Left cardiac atrium (tissue), 4 donors: ENCODE measurements at regions of chr1 and their contacts with region 1.

Region 1: DNA sequence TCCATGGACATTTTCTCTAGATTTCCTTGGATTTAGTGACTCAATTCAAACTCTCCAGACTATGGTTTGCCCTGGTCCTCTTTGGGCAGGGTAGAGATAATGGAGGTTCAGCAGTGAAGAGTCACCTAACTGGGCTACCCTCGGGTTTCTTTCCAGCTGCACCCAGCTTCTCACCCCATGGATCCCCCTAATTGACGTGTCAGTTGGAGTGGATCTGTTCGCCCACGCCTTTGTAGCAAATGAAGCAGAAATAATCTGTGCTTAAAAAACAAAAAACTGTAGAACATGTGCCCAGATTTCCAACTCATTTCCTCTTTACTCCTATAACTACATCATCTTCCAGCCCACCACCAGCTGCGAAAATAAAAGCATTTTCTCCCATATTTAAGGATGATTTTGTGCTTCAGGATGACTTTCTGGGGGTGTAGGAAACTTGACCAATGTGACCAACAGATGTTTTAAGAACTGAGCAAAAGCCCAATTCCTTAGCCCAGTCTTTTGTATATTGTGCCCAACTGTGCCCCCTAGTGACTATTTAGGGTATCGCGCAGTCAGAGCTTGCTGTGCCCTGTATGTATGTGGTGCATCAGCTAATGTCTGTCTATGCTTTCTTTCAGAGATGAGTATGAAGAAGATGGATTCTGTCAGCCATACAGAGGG is 66.5 kb upstream of the UBE2U start:
- DNase-seq: peak; percentile 68
- ATAC-seq: peak; percentile 80 to 82

Region 2: DNA sequence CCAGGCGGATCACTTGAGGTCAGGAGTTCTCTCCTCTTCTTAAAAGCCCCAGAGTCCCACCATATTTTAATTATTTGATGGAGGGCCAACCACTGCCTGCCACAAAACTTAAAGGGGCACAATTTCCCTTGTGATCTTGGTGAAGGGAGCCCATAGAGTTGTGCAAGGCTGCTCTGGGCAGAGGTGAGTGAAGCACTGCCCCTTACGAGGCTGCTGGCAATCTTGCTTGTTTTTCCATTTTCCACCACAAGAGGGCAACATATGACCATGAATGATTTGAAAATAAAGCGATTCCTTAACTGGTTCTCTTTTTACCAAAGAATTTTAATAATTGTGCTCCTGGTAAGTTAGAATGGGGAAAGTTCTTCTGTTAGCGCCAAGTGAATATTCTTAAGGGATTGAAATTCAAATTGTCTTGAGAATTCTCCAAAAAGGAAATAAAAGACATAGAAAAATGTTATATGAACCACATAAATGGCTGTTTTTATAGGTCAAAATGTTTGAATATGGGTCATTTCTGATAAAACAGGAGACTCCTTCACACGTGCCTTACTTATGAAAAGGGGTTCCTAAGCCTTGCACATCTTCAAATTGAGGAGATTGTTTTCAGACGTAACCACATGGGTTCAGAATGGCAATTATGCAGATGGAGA is 521.0 kb before region 1 on chr1:
- intact Hi-C with region 1: loop called in 1 of 2 experiments (anchors 5 kb)
- DNase-seq: peak; percentile 34
- ATAC-seq: peak; percentile 69 to 79

Region 3: DNA sequence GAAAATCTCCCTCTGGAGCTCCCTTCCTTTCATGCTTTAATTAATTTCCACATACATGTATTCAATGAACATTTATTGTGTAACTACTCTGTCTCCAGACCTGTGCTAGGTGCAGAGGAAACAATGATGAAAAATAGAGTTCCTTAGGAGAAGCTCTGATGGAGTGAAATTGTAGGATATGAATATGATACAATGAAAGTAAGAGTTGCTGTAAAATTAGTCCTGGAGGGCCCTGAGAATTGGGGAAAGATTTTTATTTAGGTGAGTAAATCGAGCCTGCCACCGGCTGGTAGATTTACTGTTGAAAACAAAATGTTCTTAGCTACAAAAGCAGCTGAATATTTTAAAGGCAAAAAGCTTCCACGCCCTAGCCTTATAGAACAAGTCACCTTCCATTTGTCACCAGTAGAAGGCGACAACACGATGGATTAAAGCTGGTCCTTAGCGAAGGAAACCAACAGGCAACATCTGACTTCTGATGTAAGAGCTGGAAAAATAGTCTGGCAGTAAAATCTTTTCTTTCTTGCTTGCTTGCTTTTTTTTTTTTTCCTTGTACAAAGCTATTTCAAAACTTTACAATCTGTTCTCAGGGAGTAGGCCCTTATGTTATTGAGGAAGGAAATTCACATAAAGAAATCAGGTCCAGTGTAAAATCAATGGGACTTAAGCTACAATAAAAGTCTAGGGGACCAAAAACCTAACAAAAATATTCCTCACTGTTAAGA is 445.0 kb before region 1 on chr1:
- intact Hi-C with region 1: loop called (anchors 5 to 10 kb)
- DNase-seq: peak; percentile 37
- ATAC-seq: peak; percentile 83 to 90

Region 4: GRCh38 chr1:63773815-63774616 is 362.9 kb before region 1 on chr1 and contains the start of gene ROR1:
- intact Hi-C with region 1: loop called in 1 of 2 experiments (anchors 5 kb)
- DNase-seq: peak; percentile 88
- ATAC-seq: peak; percentile 97
- total RNA-seq, gene ROR1: 5.7 to 14.7 TPM

Region 5: GRCh38 chr1:63935143-63935542 is 201.7 kb before region 1 on chr1:
- intact Hi-C with region 1: loop called in 1 of 2 experiments (anchors 10 kb)
- DNase-seq: no peak
- ATAC-seq: peak; percentile 53 to 60

Region 6: GRCh38 chr1:64212031-64212430 is 75.1 kb after region 1 on chr1:
- intact Hi-C with region 1: no loop called
- DNase-seq: no peak
- ATAC-seq: peak in 1 of 2 donors; percentile 78

Region 7: DNA sequence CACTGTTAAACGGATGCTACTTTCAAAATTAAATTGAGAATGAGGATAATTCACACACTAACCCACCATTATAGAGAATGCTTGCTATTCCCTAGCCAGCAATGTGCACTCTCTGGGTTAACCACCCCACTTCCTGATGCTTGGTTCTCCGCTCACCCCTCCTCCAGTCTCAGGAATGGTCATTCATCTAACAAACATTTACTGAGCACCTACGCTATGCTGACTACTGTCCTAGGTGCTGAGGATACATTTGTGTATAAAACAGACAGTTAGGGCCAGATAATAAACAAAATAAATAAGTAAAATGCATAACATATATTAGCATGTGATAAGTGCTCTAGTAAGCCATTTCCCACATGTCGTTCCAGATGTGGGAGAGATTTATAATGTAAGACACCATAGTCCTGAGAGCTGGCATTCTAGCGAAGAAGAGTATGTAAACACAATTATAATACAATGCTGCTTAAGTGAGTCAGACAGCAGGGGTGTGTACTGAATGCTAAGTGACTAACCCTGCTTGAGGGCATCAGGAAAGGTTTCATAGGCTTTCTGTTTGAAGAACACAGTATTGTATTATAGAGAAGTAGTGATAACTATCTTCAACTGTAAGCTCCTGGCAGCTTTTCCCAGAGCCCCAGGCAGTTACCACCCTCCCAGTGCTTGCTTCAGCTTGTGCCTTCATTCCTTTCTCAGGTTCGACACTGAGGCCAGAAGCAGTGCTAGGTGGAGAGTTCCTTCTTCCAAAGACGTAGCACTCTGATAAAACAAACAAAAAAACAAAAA is 206.4 kb after region 1 on chr1:
- intact Hi-C with region 1: no loop called
- DNase-seq: no peak
- ATAC-seq: no peak